WTC11 (cell line): ENCODE measurements at regions of chr16 and their contacts with region 1.

Region 1: DNA sequence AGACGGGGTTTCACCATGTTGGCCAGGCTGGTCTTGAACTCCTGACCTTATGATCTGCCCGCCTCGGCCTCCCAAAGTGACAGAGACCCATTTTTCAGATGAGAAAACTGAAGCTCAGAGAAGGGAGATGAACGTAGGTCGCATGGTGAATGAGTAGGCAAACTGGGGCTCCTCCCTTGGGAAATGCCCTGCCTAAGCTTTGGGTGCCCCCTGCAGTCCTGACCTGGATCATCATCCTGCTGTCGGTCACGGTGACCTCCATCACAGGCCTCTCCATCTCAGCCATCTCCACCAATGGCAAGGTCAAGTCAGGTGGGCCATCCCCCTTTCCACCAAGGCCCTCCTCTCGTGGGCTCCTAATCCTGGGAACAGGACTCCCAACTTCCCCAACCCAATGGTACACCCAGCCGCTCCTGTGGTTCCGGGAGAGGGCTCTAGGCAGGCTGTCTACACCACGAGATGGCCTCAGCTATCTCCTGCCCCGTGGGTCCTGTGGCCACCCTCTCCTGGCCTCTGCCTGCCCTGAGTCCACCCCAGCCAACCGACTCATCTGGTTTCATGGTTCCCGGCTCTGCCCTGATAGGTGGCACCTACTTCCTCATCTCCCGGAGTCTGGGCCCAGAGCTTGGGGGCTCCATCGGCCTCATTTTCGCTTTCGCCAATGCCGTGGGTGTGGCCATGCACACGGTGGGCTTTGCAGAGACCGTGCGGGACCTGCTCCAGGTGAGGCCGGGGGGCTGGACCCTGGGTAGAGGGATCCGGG is 4.7 kb downstream of the SLC12A3 start:
- DNase-seq: peak; percentile 70
- ATAC-seq: peak; percentile 90
- H3K4me3 Mint-ChIP-seq: no peak overlapping the region
- H3K27ac Mint-ChIP-seq: no peak overlapping the region
- H3K4me1 Mint-ChIP-seq: no peaks in the 10 kb centered on the region
- H3K27me3 Mint-ChIP-seq: no peaks in the 10 kb centered on the region
- CTCF ChIP-seq: no peak

Region 2: DNA sequence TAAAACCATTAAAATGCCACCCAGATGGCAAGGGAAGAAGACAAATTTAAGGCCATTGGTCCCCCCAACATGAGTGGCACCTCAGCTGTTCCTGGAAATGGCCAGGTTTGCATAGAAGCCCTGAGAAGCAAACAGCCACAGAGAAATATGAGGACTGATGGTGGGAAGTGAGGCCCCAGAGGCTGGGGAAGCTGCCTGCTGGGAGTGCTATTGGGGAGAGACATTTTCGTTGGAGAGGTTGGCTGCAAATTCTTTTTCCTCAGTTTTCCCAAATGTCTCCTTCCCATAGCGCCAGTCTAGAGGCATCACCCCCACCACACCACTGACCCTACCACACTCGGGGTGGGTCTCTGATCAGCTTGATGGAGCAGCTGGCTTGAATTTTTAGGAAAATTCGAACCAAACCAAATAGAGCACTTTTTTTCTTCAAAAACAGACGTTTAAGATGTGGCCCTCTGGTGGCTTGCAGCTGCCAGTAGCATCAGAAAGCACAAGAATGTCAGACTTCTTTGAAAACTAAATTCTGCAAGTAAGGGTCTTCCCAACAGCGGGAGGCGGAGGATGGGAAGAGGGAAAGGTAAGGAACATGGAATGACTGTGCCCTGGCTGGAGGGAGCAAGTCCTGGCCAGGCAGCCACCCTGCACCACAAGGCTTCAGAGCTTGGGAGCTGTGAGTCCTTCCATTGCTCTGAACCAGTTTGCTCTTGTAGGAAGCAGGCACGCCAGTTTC is 17.9 kb before region 1 on chr16:
- CTCF ChIA-PET with region 1: interaction called, 10 read pairs
- POLR2A ChIA-PET with region 1: no interaction called
- DNase-seq: peak; percentile 40
- ATAC-seq: peak; percentile 55
- H3K4me3 Mint-ChIP-seq: no peak overlapping the region
- H3K27ac Mint-ChIP-seq: no peak overlapping the region; the same call in 1 of the 2 replicates
- H3K4me1 Mint-ChIP-seq: peaks cover 31% of the 10 kb centered on the region
- H3K27me3 Mint-ChIP-seq: no peaks in the 10 kb centered on the region
- CTCF ChIP-seq: no peak

Region 3: DNA sequence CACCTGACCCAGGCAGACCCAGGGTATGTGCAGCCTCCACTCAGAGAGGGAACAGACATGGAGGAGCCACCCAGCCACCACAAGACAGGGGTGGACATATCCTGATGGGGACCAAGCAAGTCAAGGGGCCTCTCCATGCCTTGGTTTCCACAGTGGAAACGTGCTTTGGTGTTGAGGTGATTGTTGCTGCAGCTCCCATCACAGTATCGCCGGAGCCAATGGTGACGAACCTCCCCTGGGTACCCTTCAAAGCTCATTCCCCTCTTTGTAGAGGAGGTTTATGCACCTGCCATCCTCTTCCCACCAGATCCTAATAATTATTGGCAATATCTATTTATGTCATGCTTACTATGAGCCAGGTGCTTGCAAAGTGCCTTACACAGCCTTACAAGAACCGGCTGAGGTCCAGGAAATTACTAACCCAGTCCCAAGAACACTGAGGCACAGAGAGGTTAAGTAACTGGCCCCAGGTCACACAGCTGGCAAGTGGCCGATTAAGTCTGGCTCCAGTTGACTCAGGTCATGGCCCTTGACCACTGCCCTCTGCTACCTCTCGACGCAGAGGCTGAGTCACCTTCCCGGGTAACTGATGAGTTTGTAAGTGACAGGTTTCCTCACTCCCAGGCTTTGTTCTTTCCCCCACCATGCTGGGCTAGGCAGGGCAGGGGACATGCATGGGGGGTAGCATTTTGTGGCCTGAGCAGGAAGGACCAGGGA is 15.9 kb after region 1 on chr16:
- CTCF ChIA-PET with region 1: no interaction called
- POLR2A ChIA-PET with region 1: no interaction called
- DNase-seq: no peak
- ATAC-seq: no peak
- H3K4me3 Mint-ChIP-seq: no peak overlapping the region
- H3K27ac Mint-ChIP-seq: no peak overlapping the region
- H3K4me1 Mint-ChIP-seq: no peaks in the 10 kb centered on the region
- H3K27me3 Mint-ChIP-seq: no peaks in the 10 kb centered on the region; the same call in 1 of the 2 replicates
- CTCF ChIP-seq: no peak

Region 4: DNA sequence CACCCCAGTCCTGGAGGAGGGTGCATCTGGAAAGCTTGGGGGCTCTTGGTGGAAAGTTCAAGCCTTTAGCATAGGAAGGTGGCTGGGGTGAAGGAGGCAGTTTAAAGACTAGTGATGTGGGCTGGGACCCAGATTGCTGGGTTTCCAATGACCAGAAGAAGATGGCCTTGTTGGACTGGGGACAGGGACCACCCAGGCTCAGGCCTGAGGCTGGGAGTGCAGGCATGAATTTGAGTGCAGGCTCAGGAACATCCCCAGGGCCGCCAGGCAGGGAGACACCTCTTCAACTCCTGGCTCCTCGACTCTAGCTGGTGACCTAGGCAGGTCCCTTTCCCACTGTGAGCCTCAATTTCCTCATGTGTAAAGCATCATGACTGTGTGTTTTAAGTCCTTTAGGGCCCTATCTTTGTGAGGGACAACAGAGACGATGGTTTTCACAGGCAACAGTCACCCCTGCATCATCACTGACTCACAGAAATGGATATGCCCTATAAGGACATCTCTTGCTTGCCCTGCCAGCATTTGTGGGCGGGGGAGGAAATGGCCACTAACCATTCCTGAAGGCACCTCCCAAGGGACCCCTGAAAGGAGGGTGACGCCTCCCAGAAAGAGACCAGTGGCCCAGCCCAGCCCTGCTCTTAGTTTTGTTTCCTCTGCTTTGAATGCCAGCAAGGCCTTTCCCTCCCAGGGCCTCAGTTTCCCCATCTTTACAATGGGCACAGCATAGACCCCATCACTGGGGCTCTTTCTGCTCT is 130.8 kb after region 1 on chr16:
- CTCF ChIA-PET with region 1: no interaction called
- POLR2A ChIA-PET with region 1: no interaction called
- DNase-seq: no peak
- ATAC-seq: no peak
- H3K4me3 Mint-ChIP-seq: no peak overlapping the region
- H3K27ac Mint-ChIP-seq: no peak overlapping the region
- H3K4me1 Mint-ChIP-seq: peaks cover 14% of the 10 kb centered on the region
- H3K27me3 Mint-ChIP-seq: peaks cover 10% of the 10 kb centered on the region; the same call in 1 of the 2 replicates
- CTCF ChIP-seq: no peak